Head of caudate nucleus (tissue), 42 donors: ENCODE measurements at regions of chr14 and their contacts with region 1.

Region 1: DNA sequence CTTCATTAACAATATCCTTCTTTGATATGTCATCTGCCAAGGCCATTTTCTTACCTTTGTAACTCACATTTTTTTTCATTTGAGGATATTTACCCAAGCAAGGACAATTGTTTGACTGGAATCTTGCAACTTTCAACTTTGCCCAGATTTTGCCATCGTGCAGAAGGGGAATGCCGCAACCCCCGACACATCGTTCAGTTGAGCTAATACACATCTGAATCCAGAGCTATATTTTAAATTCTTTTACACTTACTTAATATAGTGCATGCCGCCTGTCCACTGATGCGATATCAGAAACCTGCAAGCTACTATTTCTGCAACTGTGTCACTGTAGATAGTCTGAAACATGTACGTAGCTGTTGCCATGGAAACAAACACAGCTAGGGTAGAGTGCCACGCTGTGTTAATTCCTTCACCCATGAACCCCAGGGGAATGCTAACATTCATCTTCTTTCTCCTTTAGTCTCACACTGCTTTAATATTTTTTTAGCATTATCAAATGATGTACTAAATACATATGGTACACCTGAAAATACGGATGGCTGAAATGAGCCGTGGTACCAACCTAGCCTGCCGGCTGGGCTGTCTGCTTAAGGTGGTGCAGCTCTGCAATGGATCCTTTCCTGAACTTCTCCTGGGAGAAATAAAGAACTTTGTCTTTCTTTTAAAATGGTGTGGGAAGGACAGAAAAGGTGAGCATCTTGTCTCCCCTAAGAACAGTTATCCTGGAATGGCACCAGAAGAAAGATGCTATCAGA is 77.0 kb upstream of the FOXN3 start:
- DNase-seq: peak in 15 of 42 donors; percentile 8 to 74 (median 43)

Region 2: DNA sequence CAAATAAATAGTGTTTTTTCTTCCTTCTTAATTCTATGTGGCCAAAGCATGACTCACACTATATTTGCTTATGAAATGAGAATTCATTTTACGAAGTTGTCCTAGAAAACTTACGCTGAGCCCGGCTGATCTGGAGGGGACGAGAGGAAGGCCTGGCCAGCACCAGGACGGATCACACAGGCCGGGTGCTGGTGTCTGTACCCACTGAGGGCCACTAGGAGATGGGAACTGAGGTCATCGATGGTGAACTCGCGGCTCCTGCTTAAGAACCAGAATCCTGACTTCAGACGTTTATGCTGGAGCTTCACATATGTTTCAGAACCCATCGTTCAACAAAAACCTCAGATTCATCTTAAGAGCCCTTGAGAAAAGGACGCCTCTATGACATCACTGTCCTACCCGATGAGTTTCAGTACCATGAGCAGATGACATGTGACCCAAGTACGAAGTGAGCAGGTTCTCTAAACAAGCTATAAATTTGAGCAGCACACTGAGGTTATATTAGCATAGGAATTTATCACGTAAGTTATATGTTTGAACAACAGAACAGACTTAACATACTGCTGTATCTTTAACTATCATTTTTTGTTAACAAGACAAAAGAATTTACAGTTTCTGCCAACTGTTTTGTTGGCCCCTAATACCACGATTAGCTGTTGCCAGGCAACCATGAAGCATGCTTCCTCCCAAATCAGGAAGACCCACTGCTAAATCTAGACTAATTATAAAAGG is 188.9 kb before region 1 on chr14:
- intact Hi-C with region 1: no loop called
- DNase-seq: no peak

Region 3: GRCh38 chr14:89618811-89619551 is 124.9 kb after region 1 on chr14:
- intact Hi-C with region 1: loop called (anchors 5 kb)
- DNase-seq: peak; percentile 24 to 85 (median 70)

Region 4: GRCh38 chr14:89669193-89669592 is 175.1 kb after region 1 on chr14:
- intact Hi-C with region 1: no loop called
- DNase-seq: peak in 40 of 42 donors; percentile 7 to 65 (median 38)